Heart right ventricle (tissue), 16 donors: ENCODE measurements at regions of chr3 and their contacts with region 1.

Region 1: DNA sequence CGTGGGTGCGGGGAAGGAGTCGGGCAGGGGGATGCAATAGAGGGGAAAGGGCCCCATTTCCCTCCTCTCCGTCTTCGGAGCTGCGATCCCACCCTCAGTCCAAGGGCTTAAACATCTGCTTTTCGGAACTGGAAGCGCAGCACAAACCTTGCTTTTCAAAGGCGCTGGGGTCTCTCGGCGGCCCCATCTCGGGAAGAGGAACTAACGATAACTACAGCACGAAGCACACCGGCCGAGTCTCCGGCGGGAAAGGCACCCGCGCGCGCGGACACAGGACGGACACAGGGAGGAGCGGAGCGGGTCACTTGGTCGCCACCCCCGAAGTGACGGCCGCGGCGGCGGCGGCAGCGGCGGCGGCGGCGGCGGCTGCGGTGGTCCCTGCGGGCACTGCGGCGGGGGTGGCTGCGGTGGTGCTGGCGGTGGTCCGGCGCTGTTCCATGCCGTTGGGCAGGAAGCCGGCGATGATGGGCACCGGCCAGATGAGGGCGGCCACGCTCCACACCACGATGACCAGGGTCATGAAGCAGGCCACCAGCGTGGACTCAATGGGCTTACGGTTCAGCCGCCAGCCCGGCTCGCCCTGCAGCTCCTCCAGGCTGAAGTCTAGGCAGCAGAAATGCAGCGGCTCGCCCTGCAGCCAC is 1.1 kb downstream of the TMEM158 start:
- DNase-seq: peak; percentile 63 to 75
- ATAC-seq: peak; percentile 73 to 87 (median 81)
- H3K4me3 ChIP-seq: peak overlapping the region in 9 of 10 donors; percentile 34 to 55 (median 48)
- H3K27ac ChIP-seq: peak overlapping the region in 1 of 10 donors; percentile 1
- H3K4me1 ChIP-seq: peaks cover 0 to 14% (median 8%) of the 10 kb centered on the region in 9 donors
- H3K27me3 ChIP-seq: peaks cover 0 to 84% (median 65%) of the 10 kb centered on the region in 7 donors
- CTCF ChIP-seq: peak; percentile 26 to 58 (median 54)

Region 2: GRCh38 chr3:45362758-45363157 is 137.8 kb after region 1 on chr3:
- intact Hi-C with region 1: no loop called
- DNase-seq: no peak
- ATAC-seq: no peak
- H3K4me3 ChIP-seq: no peak overlapping the region
- H3K27ac ChIP-seq: no peak overlapping the region
- H3K4me1 ChIP-seq: no peaks in the 10 kb centered on the region
- H3K27me3 ChIP-seq: peaks cover 0 to 14% (median 0%) of the 10 kb centered on the region in 7 donors
- CTCF ChIP-seq: no peak

Region 3: GRCh38 chr3:45479621-45480035 is 254.7 kb after region 1 on chr3:
- intact Hi-C with region 1: loop called in 2 of 10 experiments (anchors 10 kb)
- DNase-seq: no peak
- ATAC-seq: no peak
- H3K4me3 ChIP-seq: no peak overlapping the region
- H3K27ac ChIP-seq: no peak overlapping the region
- H3K4me1 ChIP-seq: peaks cover 0 to 6% (median 0%) of the 10 kb centered on the region in 9 donors
- H3K27me3 ChIP-seq: no peaks in the 10 kb centered on the region
- CTCF ChIP-seq: no peak